ENCODE measurements at regions of chr12 and their contacts with region 1.

Region 1: DNA sequence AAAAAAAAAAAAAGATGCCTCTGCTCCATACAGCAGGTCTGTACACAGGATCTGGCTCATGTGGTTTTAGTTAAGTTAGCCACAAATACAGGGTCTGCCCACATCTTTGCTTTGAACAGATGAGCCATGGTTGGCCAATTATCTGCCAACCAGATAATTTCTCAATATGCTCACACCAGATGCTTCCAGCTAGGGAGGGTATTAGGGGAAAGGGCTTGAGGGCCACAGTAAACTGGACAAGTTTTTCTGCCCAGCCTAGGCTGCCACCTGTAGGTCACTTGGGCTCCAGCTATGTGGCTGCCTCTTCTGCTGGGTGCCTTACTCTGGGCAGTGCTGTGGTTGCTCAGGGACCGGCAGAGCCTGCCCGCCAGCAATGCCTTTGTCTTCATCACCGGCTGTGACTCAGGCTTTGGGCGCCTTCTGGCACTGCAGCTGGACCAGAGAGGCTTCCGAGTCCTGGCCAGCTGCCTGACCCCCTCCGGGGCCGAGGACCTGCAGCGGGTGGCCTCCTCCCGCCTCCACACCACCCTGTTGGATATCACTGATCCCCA is 776 bp downstream of the RDH5 start:
- DNase-seq: peak; percentile 59
- H3K4me3 ChIP-seq: no peak overlapping the region
- H3K27ac ChIP-seq: peak overlapping the region; percentile 37 to 44
- H3K4me1 ChIP-seq: peaks cover 7% of the 10 kb centered on the region
- H3K27me3 ChIP-seq: no peaks in the 10 kb centered on the region
- CTCF ChIP-seq: peak in 3 of 4 experiments; percentile 49 to 70 (median 61)
- POLR2A ChIP-seq: no peak

Region 2: GRCh38 chr12:55679691-55680090 is 41.3 kb before region 1 on chr12:
- intact Hi-C with region 1: loop called (anchors 1 kb)
- DNase-seq: no peak
- H3K4me3 ChIP-seq: no peak overlapping the region
- H3K27ac ChIP-seq: no peak overlapping the region
- H3K4me1 ChIP-seq: no peaks in the 10 kb centered on the region
- H3K27me3 ChIP-seq: no peaks in the 10 kb centered on the region
- CTCF ChIP-seq: no peak
- POLR2A ChIP-seq: no peak

Region 3: GRCh38 chr12:55738123-55739024 is 17.4 kb after region 1 on chr12:
- intact Hi-C with region 1: no loop called
- DNase-seq: peak; percentile 84
- H3K4me3 ChIP-seq: peak overlapping the region; percentile 26 to 41
- H3K27ac ChIP-seq: peak overlapping the region; percentile 56 to 61
- H3K4me1 ChIP-seq: no peaks in the 10 kb centered on the region
- H3K27me3 ChIP-seq: no peaks in the 10 kb centered on the region
- CTCF ChIP-seq: peak; percentile 72 to 96 (median 92)
- POLR2A ChIP-seq: no peak

Region 4: GRCh38 chr12:56521590-56522371 is 800.8 kb after region 1 on chr12 and contains the start of gene RBMS2:
- intact Hi-C with region 1: no loop called
- DNase-seq: peak; percentile 86
- H3K4me3 ChIP-seq: peak within 1 kb of the TSS; percentile 43 to 46
- H3K27ac ChIP-seq: peak within 1 kb of the TSS; percentile 91 to 92
- H3K4me1 ChIP-seq: peaks cover 4% of the 10 kb centered on the region
- H3K27me3 ChIP-seq: no peaks in the 10 kb centered on the region
- CTCF ChIP-seq: no peak
- POLR2A ChIP-seq: no peak
- total RNA-seq, gene RBMS2: 21.1 to 259 TPM